SK-N-SH (cell line): ENCODE measurements at regions of chr2 and their contacts with region 1.

Region 1: GRCh38 chr2:38115216-38116032 is 39.5 kb upstream of the CYP1B1 start:
- DNase-seq: peak; percentile 85
- H3K4me3 ChIP-seq: no peak overlapping the region; a peak in 1 of 4 replicates
- H3K27ac ChIP-seq: peak overlapping the region in 1 of 2 experiments; percentile 54; a peak in 1 of 4 replicates
- H3K4me1 ChIP-seq: peaks cover 0 to 27% of the 10 kb centered on the region in 2 experiments; a peak in 2 of 4 replicates
- H3K27me3 ChIP-seq: no peaks in the 10 kb centered on the region
- CTCF ChIP-seq: peak; percentile 98
- EP300 ChIP-seq: 0 out of 4 replicates have a peak, but pooled peaks of 1 of the 2 experiments have one; percentile 14
- RAD21 ChIP-seq: peak; percentile 99

Region 2: DNA sequence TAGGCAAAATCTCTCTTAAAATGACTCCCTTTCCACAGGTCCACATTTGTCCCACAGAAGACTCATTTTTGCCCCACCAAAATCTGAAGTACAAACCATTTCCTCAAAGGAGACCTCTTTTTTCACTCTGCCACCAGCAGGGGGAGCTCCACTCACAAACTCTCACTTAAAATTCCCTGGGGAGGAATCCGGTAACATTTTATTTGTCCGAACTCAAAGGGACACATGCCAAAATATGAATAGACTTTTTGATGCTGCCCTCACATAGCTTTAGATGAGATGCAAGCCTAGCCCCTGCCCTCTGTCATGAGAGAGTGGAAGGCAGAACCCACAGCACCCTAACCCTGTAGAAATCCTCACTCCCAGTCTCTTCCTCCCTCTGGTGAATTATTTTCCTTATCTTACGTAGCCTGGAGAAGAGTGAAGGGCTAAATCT is 133.3 kb before region 1 on chr2:
- CTCF ChIA-PET with region 1: interaction called, 16 read pairs
- POLR2A ChIA-PET with region 1: no interaction called
- DNase-seq: peak; percentile 60
- H3K4me3 ChIP-seq: peak overlapping the region; percentile 2 to 25; a peak in 1 of 4 replicates
- H3K27ac ChIP-seq: 0 out of 4 replicates have a peak overlapping the region, but pooled peaks of 1 of the 2 experiments have one; percentile 2
- H3K4me1 ChIP-seq: peaks cover 0 to 3% of the 10 kb centered on the region in 2 experiments; a peak in 2 of 4 replicates
- H3K27me3 ChIP-seq: no peaks in the 10 kb centered on the region
- CTCF ChIP-seq: peak; percentile 99
- EP300 ChIP-seq: no peak
- RAD21 ChIP-seq: peak; percentile 78

Region 3: DNA sequence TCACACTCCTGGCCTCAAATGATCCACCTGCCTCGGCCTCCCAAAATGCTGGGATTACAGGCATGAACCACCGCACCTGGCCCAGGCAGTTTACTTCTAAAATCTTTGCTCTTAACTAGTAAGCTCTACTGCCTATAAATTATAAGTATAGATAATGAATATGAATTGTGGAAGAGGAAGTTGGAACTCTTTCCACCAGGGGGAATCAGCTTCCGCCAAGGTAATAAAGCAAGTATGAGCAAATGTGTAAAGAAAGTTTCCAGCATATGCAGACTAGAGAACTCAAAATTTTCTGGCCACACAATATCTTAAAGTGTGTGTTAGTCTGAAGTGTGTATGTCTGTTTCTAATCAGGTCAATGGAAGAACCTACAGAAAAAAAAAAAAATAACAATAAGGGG is 122.3 kb before region 1 on chr2:
- CTCF ChIA-PET with region 1: interaction called, 10 read pairs
- POLR2A ChIA-PET with region 1: no interaction called
- DNase-seq: no peak
- H3K4me3 ChIP-seq: no peak overlapping the region
- H3K27ac ChIP-seq: no peak overlapping the region
- H3K4me1 ChIP-seq: no peaks in the 10 kb centered on the region
- H3K27me3 ChIP-seq: no peaks in the 10 kb centered on the region
- CTCF ChIP-seq: peak; percentile 27; the same call in 1 of the 2 replicates
- EP300 ChIP-seq: no peak
- RAD21 ChIP-seq: peak; percentile 21; the same call in 1 of the 2 replicates

Region 4: GRCh38 chr2:38095996-38096861 is 19.2 kb before region 1 on chr2:
- CTCF ChIA-PET with region 1: interaction called, 10 read pairs
- POLR2A ChIA-PET with region 1: no interaction called
- DNase-seq: no peak
- H3K4me3 ChIP-seq: no peak overlapping the region
- H3K27ac ChIP-seq: peak overlapping the region in 1 of 2 experiments; percentile 43; a peak in 2 of 4 replicates
- H3K4me1 ChIP-seq: peaks cover 0 to 44% of the 10 kb centered on the region in 2 experiments; a peak in 2 of 4 replicates
- H3K27me3 ChIP-seq: no peaks in the 10 kb centered on the region
- CTCF ChIP-seq: no peak
- EP300 ChIP-seq: no peak
- RAD21 ChIP-seq: no peak

Region 5: DNA sequence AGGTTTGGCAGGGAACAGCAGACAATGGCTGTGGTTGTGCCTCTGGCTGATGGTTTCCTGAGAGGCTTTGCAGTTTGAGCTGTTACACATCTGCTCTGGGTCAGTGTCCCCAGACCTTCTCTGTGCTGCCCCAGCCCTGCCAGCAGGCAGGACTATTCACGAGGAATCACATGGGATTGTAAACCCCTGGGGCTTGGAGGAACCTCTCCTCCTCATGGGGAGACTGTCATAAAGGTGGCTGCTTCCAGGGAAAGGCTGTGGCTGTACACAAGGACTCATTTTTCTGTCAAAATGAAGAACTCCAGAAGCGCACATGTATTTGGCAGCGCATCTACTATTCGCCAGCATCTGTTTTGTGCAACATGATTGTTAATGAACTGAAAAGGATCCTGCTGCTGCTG is 103.2 kb after region 1 on chr2:
- CTCF ChIA-PET with region 1: interaction called, 14 read pairs
- POLR2A ChIA-PET with region 1: interaction called, 6 read pairs
- DNase-seq: peak; percentile 74
- H3K4me3 ChIP-seq: peak overlapping the region in 1 of 2 experiments; percentile 4; a peak in 1 of 4 replicates
- H3K27ac ChIP-seq: peak overlapping the region in 1 of 2 experiments; percentile 99; a peak in 2 of 4 replicates
- H3K4me1 ChIP-seq: peaks cover 0 to 44% of the 10 kb centered on the region in 2 experiments; a peak in 2 of 4 replicates
- H3K27me3 ChIP-seq: no peaks in the 10 kb centered on the region
- CTCF ChIP-seq: no peak
- EP300 ChIP-seq: peak in 1 of 2 experiments; percentile 97; a peak in 2 of 4 replicates
- RAD21 ChIP-seq: peak; percentile 53

Region 6: GRCh38 chr2:38254796-38255195 is 139.4 kb after region 1 on chr2:
- CTCF ChIA-PET with region 1: no interaction called
- POLR2A ChIA-PET with region 1: no interaction called
- DNase-seq: no peak
- H3K4me3 ChIP-seq: no peak overlapping the region
- H3K27ac ChIP-seq: no peak overlapping the region
- H3K4me1 ChIP-seq: peaks cover 0 to 2% of the 10 kb centered on the region in 2 experiments; a peak in 2 of 4 replicates
- H3K27me3 ChIP-seq: no peaks in the 10 kb centered on the region
- CTCF ChIP-seq: no peak
- EP300 ChIP-seq: no peak
- RAD21 ChIP-seq: no peak

Region 7: DNA sequence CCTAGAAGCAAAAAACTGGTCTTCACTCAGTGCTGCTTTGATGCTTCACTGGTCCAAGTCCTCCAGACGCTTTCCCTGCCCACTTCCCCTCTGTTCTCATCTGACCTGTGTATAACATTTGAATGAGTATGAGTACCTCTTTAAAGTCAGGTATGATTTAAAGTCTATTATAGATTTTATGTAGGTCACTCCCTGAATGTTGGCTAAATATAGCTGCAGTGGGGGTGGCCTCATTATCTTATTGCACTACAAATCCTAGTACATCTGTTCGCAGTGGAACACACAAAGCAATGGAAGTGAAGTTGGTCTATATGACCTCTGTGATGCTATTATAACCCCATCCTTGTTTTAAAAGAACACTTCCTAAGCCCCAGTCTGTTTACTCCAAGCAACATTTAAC is 807.5 kb after region 1 on chr2:
- CTCF ChIA-PET with region 1: no interaction called
- POLR2A ChIA-PET with region 1: no interaction called
- DNase-seq: no peak
- H3K4me3 ChIP-seq: no peak overlapping the region
- H3K27ac ChIP-seq: no peak overlapping the region
- H3K4me1 ChIP-seq: no peaks in the 10 kb centered on the region; a peak in 1 of 4 replicates
- H3K27me3 ChIP-seq: no peaks in the 10 kb centered on the region
- CTCF ChIP-seq: no peak
- EP300 ChIP-seq: no peak
- RAD21 ChIP-seq: no peak